MCF 10A (cell line): ENCODE measurements at regions of chr16 and their contacts with region 1.

Region 1: GRCh38 chr16:71808593-71809459 is at the start of gene AP1G1:
- DNase-seq: peak; percentile 97
- H3K4me3 Mint-ChIP-seq: peak within 1 kb of the TSS; percentile 84
- H3K27ac Mint-ChIP-seq: peak within 1 kb of the TSS; percentile 100
- H3K4me1 Mint-ChIP-seq: no peaks in the 10 kb centered on the region
- H3K27me3 Mint-ChIP-seq: no peaks in the 10 kb centered on the region
- CTCF ChIP-seq: no peak
- total RNA-seq, gene AP1G1: 99.5 and 100 TPM in 2 replicates

Region 2: GRCh38 chr16:71723537-71724319 is 85.1 kb before region 1 on chr16:
- CTCF ChIA-PET with region 1: no interaction called
- POLR2A ChIA-PET with region 1: interaction called, 11 read pairs
- intact Hi-C with region 1: no loop called
- DNase-seq: peak; percentile 56
- H3K4me3 Mint-ChIP-seq: peak overlapping the region; percentile 96
- H3K27ac Mint-ChIP-seq: no peak overlapping the region
- H3K4me1 Mint-ChIP-seq: peaks cover 5% of the 10 kb centered on the region
- H3K27me3 Mint-ChIP-seq: no peaks in the 10 kb centered on the region
- CTCF ChIP-seq: no peak

Region 3: GRCh38 chr16:71794943-71795342 is 13.9 kb before region 1 on chr16:
- CTCF ChIA-PET with region 1: interaction called, 6 read pairs
- POLR2A ChIA-PET with region 1: interaction called, 33 read pairs
- intact Hi-C with region 1: no loop called
- DNase-seq: no peak
- H3K4me3 Mint-ChIP-seq: no peak overlapping the region
- H3K27ac Mint-ChIP-seq: no peak overlapping the region
- H3K4me1 Mint-ChIP-seq: peaks cover 11% of the 10 kb centered on the region
- H3K27me3 Mint-ChIP-seq: no peaks in the 10 kb centered on the region
- CTCF ChIP-seq: no peak

Region 4: DNA sequence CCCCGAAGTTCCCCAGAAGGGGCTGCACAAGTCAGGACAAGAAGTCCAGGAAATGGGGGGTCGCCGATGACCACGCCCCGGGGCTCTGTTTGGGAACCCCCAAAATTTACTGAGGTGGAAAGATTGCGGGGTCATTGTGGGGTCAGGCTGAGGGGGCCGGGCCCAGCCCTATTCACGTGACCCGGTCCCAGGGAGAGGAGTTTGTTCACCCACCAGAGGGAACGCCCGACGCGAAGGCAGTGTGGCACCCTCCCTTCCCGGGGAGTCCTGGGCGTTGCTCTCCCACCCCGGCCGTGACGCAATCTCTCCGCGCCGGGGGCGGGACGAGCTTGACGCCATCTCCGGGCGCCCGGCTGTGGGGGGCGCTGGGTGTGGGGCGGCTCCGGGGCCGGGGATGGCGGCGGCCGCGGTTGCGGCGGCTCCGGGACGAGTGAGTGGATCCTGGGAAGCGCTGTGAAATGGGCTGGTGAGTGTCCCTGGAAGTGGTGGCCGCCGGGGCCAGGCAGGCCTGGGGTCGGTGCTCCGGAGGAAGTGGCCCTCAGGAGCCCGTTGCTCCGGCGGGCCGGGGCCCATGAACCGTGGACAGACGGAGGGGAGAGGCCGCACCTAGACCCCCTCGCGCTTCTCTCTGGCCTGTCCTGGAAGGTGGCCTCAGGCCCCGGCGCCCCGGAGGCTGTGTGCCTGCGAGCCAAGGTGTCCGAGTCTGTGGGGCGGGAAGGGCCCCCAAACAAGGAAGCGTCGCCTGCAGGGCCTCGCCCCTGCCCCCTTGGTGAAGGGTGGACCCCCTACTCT is 37.0 kb after region 1 on chr16 and contains the start of gene ATXN1L:
- CTCF ChIA-PET with region 1: interaction called, 3 read pairs
- POLR2A ChIA-PET with region 1: interaction called, 60 read pairs
- intact Hi-C with region 1: loop called (anchors 2 kb)
- DNase-seq: peak; percentile 93
- H3K4me3 Mint-ChIP-seq: peak within 1 kb of the TSS; percentile 90
- H3K27ac Mint-ChIP-seq: peak within 1 kb of the TSS; percentile 98
- H3K4me1 Mint-ChIP-seq: peaks cover 22% of the 10 kb centered on the region
- H3K27me3 Mint-ChIP-seq: no peaks in the 10 kb centered on the region
- CTCF ChIP-seq: no peak
- total RNA-seq, gene ATXN1L: 18.2 and 20.4 TPM in 2 replicates

Region 5: DNA sequence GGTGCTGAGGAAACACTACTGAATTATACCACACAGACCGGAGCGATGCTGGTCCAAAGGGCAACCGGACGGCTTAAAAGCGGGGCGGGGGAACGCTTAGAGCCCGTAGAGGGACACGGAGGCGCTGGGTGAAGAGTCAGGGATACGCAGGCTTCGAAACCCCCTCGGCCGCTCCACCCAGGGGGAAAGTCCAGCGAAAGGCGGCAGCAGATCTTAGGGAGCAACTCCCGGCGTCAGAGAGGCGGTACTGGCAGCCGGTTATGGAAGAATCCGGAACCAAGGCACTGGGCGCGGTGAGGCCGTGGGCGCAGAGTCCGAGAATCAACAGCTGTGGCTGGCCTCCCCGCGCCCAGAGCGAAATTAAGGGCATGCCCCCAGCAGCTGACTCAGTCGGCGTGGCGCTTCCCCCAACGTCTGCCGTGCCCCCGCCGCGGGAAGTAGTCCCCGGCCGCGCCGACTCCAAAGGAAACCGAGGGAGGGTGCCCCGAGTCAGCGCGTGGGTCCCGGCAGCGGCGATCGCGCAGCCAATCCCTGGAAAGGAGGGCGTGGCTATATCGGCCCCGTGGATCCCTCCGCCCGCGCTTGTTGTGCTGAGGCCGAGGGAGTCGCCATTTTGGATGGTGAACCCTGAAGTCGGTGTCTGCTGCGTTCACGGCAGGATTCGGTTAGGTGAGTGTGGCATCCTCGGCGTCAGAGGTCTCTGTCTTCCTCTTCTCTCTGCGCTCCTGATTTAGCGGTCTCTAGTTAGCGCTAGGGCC is 86.3 kb after region 1 on chr16 and contains the start of gene IST1:
- CTCF ChIA-PET with region 1: interaction called, 4 read pairs
- POLR2A ChIA-PET with region 1: interaction called, 58 read pairs
- intact Hi-C with region 1: loop called (anchors 2 kb)
- DNase-seq: peak; percentile 98
- H3K4me3 Mint-ChIP-seq: peak within 1 kb of the TSS; percentile 87
- H3K27ac Mint-ChIP-seq: peak within 1 kb of the TSS; percentile 96
- H3K4me1 Mint-ChIP-seq: peaks cover 6% of the 10 kb centered on the region
- H3K27me3 Mint-ChIP-seq: no peaks in the 10 kb centered on the region
- CTCF ChIP-seq: no peak
- total RNA-seq, gene IST1: 127 TPM in 2 replicates

Region 6: DNA sequence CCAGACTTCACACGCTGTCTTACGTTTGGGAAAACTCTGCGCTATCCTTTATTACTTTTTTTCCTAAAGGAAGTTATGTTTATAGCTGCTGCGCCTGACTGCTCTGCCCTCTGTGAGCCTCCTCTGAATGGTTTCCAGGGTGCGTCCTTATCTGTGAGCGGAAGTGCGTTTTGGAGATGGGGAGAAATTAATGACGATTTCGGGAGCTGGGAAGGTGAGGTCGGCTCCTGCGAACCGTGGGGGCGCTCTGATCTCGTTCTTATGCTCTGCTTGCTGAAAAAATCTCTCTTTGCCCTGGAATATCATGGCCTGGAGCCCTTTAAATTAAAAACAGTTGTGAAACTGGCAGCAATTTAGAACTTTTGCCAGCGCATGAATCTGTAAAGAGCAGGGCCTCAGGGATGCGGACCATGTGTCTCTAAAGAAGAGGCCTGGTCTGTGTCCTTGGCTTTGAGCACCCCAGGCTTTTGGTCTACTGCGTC is 1374.8 kb after region 1 on chr16:
- CTCF ChIA-PET with region 1: no interaction called
- POLR2A ChIA-PET with region 1: no interaction called
- intact Hi-C with region 1: no loop called
- DNase-seq: no peak
- H3K4me3 Mint-ChIP-seq: no peak overlapping the region
- H3K27ac Mint-ChIP-seq: no peak overlapping the region
- H3K4me1 Mint-ChIP-seq: no peaks in the 10 kb centered on the region
- H3K27me3 Mint-ChIP-seq: no peaks in the 10 kb centered on the region
- CTCF ChIP-seq: no peak